Sigmoid colon (tissue), 7 donors: ENCODE measurements at regions of chr4 and their contacts with region 1.

Region 1: GRCh38 chr4:76624241-76624681 is 189.2 kb downstream of the SHROOM3 start:
- DNase-seq: peak; percentile 66
- H3K4me3 ChIP-seq: peak overlapping the region in 3 of 4 donors; percentile 7 to 26 (median 21)
- H3K27ac ChIP-seq: peak overlapping the region; percentile 64 to 86 (median 81)
- H3K4me1 ChIP-seq: peaks cover 0 to 43% (median 40%) of the 10 kb centered on the region in 4 donors
- H3K27me3 ChIP-seq: no peaks in the 10 kb centered on the region
- CTCF ChIP-seq: no peak
- EP300 ChIP-seq: peak in 3 of 4 donors; percentile 14 to 74 (median 52)
- POLR2A ChIP-seq: no peak

Region 2: GRCh38 chr4:76546282-76547171 is 77.7 kb before region 1 on chr4:
- intact Hi-C with region 1: no loop called
- DNase-seq: no peak
- H3K4me3 ChIP-seq: no peak overlapping the region
- H3K27ac ChIP-seq: peak overlapping the region in 1 of 4 donors; percentile 43
- H3K4me1 ChIP-seq: peaks cover 0 to 16% (median 12%) of the 10 kb centered on the region in 4 donors
- H3K27me3 ChIP-seq: no peaks in the 10 kb centered on the region
- CTCF ChIP-seq: no peak
- EP300 ChIP-seq: no peak
- POLR2A ChIP-seq: no peak

Region 3: DNA sequence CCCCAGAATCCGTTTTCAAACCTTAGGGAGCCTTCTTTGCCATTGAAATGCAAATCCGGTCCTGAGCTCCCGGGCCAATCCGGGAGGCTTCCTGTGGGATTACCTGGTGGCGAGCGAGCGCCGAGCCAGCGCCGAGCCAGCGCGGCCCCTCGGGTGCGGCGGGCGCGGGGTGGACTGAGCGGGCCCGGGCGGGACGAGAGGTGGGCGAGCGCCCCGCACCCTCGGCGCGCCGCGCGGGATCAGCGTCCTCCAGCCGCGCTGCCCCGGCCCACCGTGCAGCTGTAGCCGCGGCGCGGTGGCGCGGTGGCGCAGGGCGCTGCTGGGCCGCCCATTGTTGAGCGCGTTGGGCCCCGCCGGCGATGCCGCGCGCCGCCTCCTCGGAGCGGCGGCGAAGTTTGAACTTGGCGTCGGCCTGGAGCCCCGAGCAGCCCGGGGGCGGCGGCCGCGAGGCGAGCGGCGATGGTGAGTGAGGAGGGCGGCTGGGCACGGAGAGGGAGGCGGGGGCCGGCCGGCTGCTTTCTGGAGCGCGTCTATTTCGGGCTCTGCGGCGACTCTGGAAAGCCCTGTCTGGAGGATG is 65.1 kb after region 1 on chr4:
- intact Hi-C with region 1: loop called (anchors 10 kb)
- DNase-seq: no peak
- H3K4me3 ChIP-seq: peak overlapping the region; percentile 55 to 74 (median 64)
- H3K27ac ChIP-seq: peak overlapping the region; percentile 80 to 89 (median 82)
- H3K4me1 ChIP-seq: peaks cover 0 to 38% (median 23%) of the 10 kb centered on the region in 4 donors
- H3K27me3 ChIP-seq: no peaks in the 10 kb centered on the region
- CTCF ChIP-seq: no peak
- EP300 ChIP-seq: no peak
- POLR2A ChIP-seq: no peak

Region 4: GRCh38 chr4:76758290-76758882 is 134.1 kb after region 1 on chr4:
- intact Hi-C with region 1: no loop called
- DNase-seq: no peak
- H3K4me3 ChIP-seq: no peak overlapping the region
- H3K27ac ChIP-seq: no peak overlapping the region
- H3K4me1 ChIP-seq: peaks cover 0 to 28% (median 10%) of the 10 kb centered on the region in 4 donors
- H3K27me3 ChIP-seq: no peaks in the 10 kb centered on the region
- CTCF ChIP-seq: peak in 3 of 4 experiments; percentile 51 to 67 (median 52)
- EP300 ChIP-seq: no peak
- POLR2A ChIP-seq: no peak